T-cell (primary cell): ENCODE measurements at regions of chr3 and their contacts with region 1.

Region 1: DNA sequence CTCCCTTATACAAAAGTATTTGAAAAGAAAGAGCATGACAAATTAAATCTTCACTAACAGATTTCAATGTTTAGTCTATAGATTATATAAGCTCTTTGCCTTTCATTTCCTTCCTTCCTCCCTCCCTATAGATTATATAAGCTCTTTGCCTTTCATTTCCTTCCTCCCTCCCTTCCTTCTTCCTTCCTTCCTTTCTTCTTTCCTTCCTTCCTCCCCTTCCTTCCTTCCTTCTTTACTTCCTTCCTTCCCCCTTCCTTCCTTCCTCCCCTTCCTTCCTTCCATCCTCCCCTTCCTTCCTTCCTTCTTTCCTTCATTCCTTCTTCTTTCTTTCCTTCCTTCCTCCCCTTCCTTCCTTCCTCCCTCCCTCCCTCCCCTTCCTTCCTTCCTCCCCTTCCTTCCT is 209.8 kb upstream of the CBLB start:
- DNase-seq: no peak
- ATAC-seq: no peak
- H3K4me3 ChIP-seq: no peak overlapping the region
- H3K4me3 Mint-ChIP-seq: no peak overlapping the region
- H3K27ac ChIP-seq: no peak overlapping the region
- H3K27ac Mint-ChIP-seq: no peak overlapping the region
- H3K4me1 ChIP-seq: no peaks in the 10 kb centered on the region
- H3K4me1 Mint-ChIP-seq: peaks cover 0 to 6% (median 6%) of the 10 kb centered on the region in 3 donors
- H3K27me3 ChIP-seq: no peaks in the 10 kb centered on the region
- H3K27me3 Mint-ChIP-seq: no peaks in the 10 kb centered on the region

Region 2: GRCh38 chr3:104474011-104474410 is 1604.6 kb before region 1 on chr3:
- CTCF ChIA-PET with region 1: no interaction called
- POLR2A ChIA-PET with region 1: interaction called in 1 of 2 experiments, 10 read pairs
- DNase-seq: no peak
- ATAC-seq: no peak
- H3K4me3 ChIP-seq: no peak overlapping the region
- H3K4me3 Mint-ChIP-seq: no peak overlapping the region
- H3K27ac ChIP-seq: no peak overlapping the region
- H3K27ac Mint-ChIP-seq: no peak overlapping the region
- H3K4me1 ChIP-seq: no peaks in the 10 kb centered on the region
- H3K4me1 Mint-ChIP-seq: no peaks in the 10 kb centered on the region
- H3K27me3 ChIP-seq: no peaks in the 10 kb centered on the region
- H3K27me3 Mint-ChIP-seq: no peaks in the 10 kb centered on the region

Region 3: DNA sequence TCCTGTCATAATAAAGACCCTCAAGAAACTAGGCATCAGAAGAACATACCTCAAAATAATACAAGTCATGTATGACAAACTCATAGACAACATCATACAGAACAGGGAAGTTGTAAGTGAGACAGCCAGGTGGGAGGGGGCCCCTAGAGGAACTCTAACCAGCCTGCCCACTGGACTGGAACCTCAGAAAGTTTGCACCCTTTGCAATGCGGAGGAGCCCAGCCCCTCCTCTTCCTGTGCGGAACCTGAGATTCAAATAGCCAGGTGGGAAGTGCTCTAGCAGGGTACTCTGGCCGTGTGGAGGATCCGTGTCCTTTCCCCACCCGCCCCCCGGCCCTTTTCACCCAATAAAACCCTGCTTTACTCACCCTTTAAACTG is 177.2 kb after region 1 on chr3:
- CTCF ChIA-PET with region 1: no interaction called
- POLR2A ChIA-PET with region 1: no interaction called
- DNase-seq: peak in 1 of 35 experiments; percentile 12
- ATAC-seq: no peak
- H3K4me3 ChIP-seq: no peak overlapping the region
- H3K4me3 Mint-ChIP-seq: no peak overlapping the region
- H3K27ac ChIP-seq: no peak overlapping the region
- H3K27ac Mint-ChIP-seq: no peak overlapping the region
- H3K4me1 ChIP-seq: no peaks in the 10 kb centered on the region
- H3K4me1 Mint-ChIP-seq: peaks cover 0 to 2% (median 0%) of the 10 kb centered on the region in 3 donors
- H3K27me3 ChIP-seq: peaks cover 0 to 5% of the 10 kb centered on the region in 2 experiments
- H3K27me3 Mint-ChIP-seq: no peaks in the 10 kb centered on the region